ENCODE measurements at regions of chr2 and their contacts with region 1.

Region 1: DNA sequence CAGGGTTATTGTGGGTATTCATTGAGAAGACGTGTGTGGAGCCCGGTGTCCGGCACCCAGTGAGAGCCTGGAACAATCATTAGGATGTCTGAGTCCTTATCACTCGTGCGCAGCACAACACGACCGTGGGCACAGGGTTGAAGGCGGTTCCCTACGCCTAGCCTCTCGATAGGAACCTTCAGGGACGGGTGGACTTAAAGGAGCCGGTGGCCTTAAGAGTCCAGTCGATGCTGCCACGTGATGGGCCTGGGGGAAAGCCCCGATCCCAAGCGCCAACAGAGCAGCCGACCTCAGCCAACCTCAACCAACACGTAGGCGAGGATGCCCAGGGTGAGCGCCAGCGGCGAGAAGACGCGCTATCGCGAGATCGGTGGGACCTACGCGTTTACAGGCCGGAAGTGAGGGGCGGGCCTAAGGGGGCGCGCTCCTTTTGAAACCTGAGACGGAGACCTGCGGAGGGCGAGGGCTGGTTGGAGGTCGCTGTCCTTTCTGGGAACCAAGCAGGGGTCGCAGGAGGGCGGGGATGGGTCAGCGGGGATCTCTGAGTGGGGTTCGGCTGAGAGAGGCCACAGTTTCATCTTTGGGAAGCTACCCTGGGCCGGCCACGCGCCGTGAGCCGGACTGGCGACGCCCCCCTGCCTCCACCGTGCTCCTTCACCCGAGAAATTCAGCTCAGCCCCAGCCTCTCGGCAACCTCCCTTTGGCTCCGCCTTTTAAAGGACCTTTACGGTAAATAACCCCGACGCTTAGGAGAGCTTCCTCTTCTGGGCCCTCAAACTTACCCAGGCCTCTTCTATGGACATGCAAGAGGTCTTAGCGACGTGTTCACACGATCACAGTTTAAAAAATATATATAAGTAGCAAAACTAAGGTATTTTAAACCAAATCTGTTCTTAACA is 28.3 kb downstream of the WNT10A start:
- DNase-seq: peak; percentile 92
- H3K4me3 Mint-ChIP-seq: peak overlapping the region; percentile 83
- H3K27ac Mint-ChIP-seq: peak overlapping the region; percentile 72
- H3K4me1 Mint-ChIP-seq: peaks cover 22% of the 10 kb centered on the region
- H3K27me3 Mint-ChIP-seq: peaks cover 17% of the 10 kb centered on the region

Region 2: DNA sequence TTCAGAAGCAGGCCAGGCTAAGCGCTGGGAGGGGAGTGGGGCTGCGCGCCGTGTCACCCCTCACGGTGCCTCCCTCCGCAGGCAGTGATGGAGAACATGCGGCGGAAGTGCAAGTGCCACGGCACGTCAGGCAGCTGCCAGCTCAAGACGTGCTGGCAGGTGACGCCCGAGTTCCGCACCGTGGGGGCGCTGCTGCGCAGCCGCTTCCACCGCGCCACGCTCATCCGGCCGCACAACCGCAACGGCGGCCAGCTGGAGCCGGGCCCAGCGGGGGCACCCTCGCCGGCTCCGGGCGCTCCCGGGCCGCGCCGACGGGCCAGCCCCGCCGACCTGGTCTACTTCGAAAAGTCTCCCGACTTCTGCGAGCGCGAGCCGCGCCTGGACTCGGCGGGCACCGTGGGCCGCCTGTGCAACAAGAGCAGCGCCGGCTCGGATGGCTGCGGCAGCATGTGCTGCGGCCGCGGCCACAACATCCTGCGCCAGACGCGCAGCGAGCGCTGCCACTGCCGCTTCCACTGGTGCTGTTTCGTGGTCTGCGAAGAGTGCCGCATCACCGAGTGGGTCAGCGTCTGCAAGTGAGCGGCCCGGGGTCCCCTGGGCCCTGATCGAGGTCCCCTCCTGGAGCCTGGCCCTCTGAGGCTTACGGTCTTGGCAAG is 16.1 kb before region 1 on chr2:
- CTCF ChIA-PET with region 1: interaction called, 58 read pairs
- POLR2A ChIA-PET with region 1: interaction called, 20 read pairs
- DNase-seq: peak; percentile 86
- H3K4me3 Mint-ChIP-seq: peak overlapping the region; percentile 60
- H3K27ac Mint-ChIP-seq: peak overlapping the region; percentile 28
- H3K4me1 Mint-ChIP-seq: peaks cover 41% of the 10 kb centered on the region
- H3K27me3 Mint-ChIP-seq: peaks cover 56% of the 10 kb centered on the region

Region 3: DNA sequence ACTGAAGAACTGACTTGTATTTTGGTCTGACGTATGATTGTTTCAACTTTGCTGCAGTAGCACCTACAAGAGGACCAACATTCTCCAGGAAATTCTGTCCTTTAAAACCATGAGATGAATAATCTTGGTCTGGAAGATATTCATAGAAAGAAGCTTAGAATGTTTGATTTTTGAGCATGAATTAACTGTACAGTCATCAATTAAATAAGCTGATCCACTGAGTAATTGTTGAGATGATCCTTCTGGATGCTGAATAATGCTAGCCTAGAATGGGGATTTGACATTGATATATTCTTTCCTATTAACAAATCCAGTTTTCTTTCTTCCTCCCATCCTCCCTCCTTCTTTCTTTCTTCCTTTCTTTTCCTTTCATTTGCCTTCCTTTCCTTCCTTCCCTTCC is 11.5 kb after region 1 on chr2:
- CTCF ChIA-PET with region 1: no interaction called
- POLR2A ChIA-PET with region 1: no interaction called
- DNase-seq: no peak
- H3K4me3 Mint-ChIP-seq: no peak overlapping the region
- H3K27ac Mint-ChIP-seq: no peak overlapping the region
- H3K4me1 Mint-ChIP-seq: no peaks in the 10 kb centered on the region
- H3K27me3 Mint-ChIP-seq: peaks cover 4% of the 10 kb centered on the region

Region 4: GRCh38 chr2:219314804-219315468 is 406.0 kb after region 1 on chr2:
- CTCF ChIA-PET with region 1: no interaction called
- POLR2A ChIA-PET with region 1: no interaction called
- DNase-seq: no peak
- H3K4me3 Mint-ChIP-seq: no peak overlapping the region
- H3K27ac Mint-ChIP-seq: no peak overlapping the region
- H3K4me1 Mint-ChIP-seq: no peaks in the 10 kb centered on the region
- H3K27me3 Mint-ChIP-seq: peaks cover 12% of the 10 kb centered on the region

Measured in activated CD4-positive, alpha-beta memory T cell treated with anti-CD3 and anti-CD28 coated beads, Interleukin-2, amount 10 ng/mL, durations not matched to agents 7 days and 5 days (primary cell).